Activated T-helper 1 cell treated with anti-CD3 and anti-CD28 coated beads, Interleukin-12 subunit alpha, Interleukin-12 subunit beta, Interleukin-2, Interleukin-4 antibody, amounts not matched to agents 30 ng/mL and 10 ng/mL and 1 ng/mL, durations not matched to agents 14 hours and 24 hours and 36 hours (primary cell): ENCODE measurements at regions of chr6 and their contacts with region 1.

Region 1: DNA sequence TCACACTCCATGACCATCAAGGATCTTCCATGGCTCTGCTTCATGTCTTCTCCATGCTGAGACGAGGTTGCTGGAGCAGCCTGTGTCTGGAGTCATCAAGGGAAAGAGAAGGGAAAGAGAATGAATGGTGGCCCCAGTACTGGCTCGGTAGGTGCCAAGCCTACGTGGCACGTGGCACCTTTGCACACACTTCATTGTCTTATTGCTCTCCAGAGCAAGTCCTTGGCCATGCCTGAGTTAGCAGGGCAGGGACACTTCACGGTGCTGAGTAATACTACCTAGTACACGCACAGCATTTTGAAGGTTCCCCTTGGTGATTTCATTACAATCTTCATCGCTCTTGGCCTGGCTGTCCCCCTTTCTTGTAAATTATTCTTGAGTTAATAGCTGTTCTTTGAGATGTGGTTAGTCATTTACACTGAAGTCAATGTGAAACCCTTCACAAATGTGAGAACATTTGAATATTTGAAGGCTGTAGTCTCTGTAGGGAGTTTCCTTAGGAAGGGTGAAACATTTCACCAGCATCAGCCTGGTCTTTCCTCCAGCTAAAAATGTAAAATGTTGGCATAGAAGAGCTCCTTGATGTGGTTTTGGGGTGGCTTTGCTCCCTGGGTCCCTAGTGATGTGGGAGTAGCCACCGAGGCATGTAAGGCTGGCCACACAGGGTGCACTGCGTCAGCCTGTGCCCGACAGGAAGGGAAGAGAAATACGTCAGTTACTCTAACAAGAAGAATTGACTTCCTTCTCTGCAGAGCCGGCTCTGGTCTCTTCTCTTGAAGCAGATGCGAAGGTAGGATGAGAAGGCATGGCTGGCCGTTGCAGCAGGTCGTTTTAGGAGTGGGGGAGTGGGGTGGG is at the start of gene SYTL3:
- DNase-seq: peak; percentile 82
- H3K4me3 Mint-ChIP-seq: peak within 1 kb of the TSS; percentile 87
- H3K27ac Mint-ChIP-seq: peak within 1 kb of the TSS; percentile 93
- H3K4me1 Mint-ChIP-seq: peaks cover 74% of the 10 kb centered on the region
- H3K27me3 Mint-ChIP-seq: no peaks in the 10 kb centered on the region
- total RNA-seq, gene SYTL3: 123 and 139 TPM in 2 replicates

Region 2: GRCh38 chr6:158207422-158207788 is 442.1 kb before region 1 on chr6:
- intact Hi-C with region 1: loop called (anchors 1 kb)
- DNase-seq: peak; percentile 68
- H3K4me3 Mint-ChIP-seq: peak overlapping the region; percentile 56
- H3K27ac Mint-ChIP-seq: peak overlapping the region; percentile 96
- H3K4me1 Mint-ChIP-seq: peaks cover 63% of the 10 kb centered on the region
- H3K27me3 Mint-ChIP-seq: no peaks in the 10 kb centered on the region

Region 3: GRCh38 chr6:158718461-158719046 is 69.0 kb after region 1 on chr6:
- intact Hi-C with region 1: loop called (anchors 2 kb)
- DNase-seq: no peak
- H3K4me3 Mint-ChIP-seq: no peak overlapping the region
- H3K27ac Mint-ChIP-seq: no peak overlapping the region
- H3K4me1 Mint-ChIP-seq: peaks cover 69% of the 10 kb centered on the region
- H3K27me3 Mint-ChIP-seq: peaks cover 2% of the 10 kb centered on the region

Region 4: GRCh38 chr6:158853072-158853871 is 203.8 kb after region 1 on chr6:
- intact Hi-C with region 1: loop called (anchors 1 kb)
- DNase-seq: peak; percentile 85
- H3K4me3 Mint-ChIP-seq: no peak overlapping the region
- H3K27ac Mint-ChIP-seq: no peak overlapping the region
- H3K4me1 Mint-ChIP-seq: peaks cover 20% of the 10 kb centered on the region
- H3K27me3 Mint-ChIP-seq: no peaks in the 10 kb centered on the region

Region 5: DNA sequence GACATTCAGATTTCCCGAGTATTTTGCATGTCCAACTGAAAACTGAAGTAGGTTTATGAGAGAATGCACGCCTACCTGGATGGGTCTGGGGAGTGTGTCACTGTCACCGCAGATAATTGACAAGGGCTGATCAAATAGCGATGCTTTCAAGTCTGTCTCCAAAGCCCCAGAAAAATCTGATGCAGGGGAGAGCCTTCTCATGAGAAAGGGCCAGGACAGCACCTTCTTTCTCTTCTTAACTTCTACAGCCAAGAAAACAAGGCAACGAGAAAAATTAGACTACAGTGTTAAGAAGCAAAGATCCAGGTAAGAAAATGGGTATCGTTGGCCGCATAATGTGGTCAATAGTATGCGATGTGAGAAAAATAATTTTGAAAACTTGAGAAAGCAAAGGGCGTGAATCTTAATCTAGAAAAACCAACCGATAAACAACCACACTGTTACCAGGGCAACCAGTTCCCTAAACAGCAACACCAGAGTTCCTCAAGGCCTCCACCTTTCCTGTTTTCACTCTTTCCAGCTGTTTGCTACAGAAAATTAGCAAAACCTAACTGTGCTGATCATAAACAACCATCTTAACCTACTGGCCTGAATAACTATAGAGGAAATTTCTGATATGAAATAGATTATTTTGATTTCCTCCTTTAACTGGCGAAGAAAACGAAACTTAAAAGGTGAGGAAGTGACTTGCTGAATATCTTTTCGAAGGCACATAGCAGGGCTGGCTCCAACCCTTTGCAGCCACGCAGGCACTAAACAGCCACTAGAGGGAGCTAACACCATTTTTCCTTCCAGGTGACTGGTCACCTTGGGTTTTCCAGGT is 392.7 kb after region 1 on chr6:
- intact Hi-C with region 1: loop called (anchors 1 kb)
- DNase-seq: peak; percentile 74
- H3K4me3 Mint-ChIP-seq: peak overlapping the region; percentile 91
- H3K27ac Mint-ChIP-seq: peak overlapping the region; percentile 90
- H3K4me1 Mint-ChIP-seq: peaks cover 68% of the 10 kb centered on the region
- H3K27me3 Mint-ChIP-seq: no peaks in the 10 kb centered on the region